Activated CD4-positive, alpha-beta T cell treated with anti-CD3 and anti-CD28 coated beads, Interleukin-2, amount 10 ng/mL, durations not matched to agents 24 days and 14 days (primary cell): ENCODE measurements at regions of chr11 and their contacts with region 1.

Region 1: GRCh38 chr11:5684646-5685362 is at the start of gene TRIM5:
- DNase-seq: peak; percentile 94
- H3K4me3 Mint-ChIP-seq: peak within 1 kb of the TSS; percentile 97
- H3K27ac Mint-ChIP-seq: peak within 1 kb of the TSS; percentile 95
- H3K4me1 Mint-ChIP-seq: peaks cover 44% of the 10 kb centered on the region
- H3K27me3 Mint-ChIP-seq: no peaks in the 10 kb centered on the region
- total RNA-seq, gene TRIM5: 9.3 and 9.7 TPM in 2 replicates

Region 2: DNA sequence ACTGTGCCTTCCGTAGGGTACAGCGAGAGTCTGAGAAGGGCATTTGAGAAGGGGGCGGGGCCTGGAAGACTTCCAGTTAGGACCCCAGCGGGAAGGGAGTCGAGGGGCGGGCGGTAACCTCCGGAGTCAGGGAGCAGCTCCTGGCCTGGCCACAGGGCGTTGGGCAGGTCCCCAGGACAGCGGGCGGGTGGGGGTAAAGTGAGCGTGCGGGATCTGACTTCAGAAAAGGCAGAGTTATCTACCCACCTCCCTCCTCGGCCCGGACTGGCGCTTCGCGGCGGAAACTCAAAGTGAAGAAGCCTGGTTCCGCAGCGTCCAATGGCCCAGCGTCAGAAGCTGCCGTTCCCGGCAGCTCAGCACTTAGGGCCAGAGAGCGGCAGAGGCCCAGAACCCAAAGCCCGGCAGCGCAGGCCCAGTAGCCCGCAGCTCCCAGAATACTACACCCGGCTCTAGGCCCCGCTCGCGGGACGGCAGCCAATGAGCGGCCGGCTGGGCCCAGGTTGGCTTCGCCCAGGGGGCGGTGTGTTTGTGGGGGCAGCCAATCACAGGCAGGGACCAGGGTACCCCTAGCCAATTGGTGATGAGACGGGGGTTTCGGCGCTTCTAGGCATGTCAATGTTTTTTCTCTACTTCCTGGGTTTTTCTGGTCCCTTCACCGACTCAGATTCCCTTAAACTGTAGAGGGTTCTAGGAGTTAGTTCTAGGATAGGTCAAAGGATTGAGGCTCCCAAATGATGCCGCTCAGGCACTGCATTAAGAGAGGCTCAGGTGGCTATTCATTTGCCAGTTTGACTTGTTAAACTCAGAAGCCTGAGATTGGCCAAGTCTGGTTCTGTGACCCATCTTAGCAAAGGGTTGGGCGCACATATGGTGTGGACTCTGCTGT is 1076.8 kb before region 1 on chr11 and contains the start of gene TRIM68:
- intact Hi-C with region 1: loop called (anchors 5 kb)
- DNase-seq: peak; percentile 98
- H3K4me3 Mint-ChIP-seq: peak within 1 kb of the TSS; percentile 89
- H3K27ac Mint-ChIP-seq: peak within 1 kb of the TSS; percentile 91
- H3K4me1 Mint-ChIP-seq: peaks cover 30% of the 10 kb centered on the region
- H3K27me3 Mint-ChIP-seq: no peaks in the 10 kb centered on the region
- total RNA-seq, gene TRIM68: 8.7 and 11.3 TPM in 2 replicates

Region 3: DNA sequence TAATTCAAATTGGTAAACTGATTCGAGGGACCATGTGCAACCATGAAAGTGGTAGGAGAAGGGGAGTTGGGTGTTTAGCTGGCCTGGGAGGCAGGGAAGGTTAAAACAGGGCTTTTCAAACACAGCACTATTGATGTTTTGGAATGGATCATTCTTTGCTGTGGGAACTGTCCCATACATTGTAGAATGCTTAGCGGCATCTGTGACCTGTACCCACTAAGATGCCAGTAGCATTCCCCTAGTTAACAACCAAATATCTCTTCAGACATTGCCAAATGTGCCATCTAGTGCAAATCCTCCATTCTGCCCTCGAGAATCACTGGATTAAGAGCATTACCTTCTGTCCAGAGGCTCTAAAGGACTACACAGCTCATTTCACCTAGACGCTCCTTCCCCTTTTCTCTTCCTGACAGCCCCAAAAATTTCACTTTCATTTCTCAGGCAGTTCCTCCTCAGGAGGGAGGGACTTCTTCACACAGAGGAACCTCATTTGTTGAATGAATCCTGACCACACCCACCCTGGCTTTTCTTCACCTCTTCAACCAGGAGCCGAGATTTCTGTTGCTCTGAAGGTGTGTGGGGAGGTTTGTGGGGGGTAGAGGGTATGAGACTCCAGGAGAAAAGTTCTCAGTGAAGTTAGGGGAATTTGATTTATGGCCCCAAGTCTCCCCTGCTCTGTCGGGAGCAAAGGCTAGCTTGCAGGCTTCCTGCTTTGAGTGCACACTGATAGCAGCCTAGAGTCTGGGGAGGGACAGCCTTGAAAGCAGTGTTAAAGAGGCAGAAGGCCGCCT is 60.1 kb before region 1 on chr11 and contains the start of gene TRIM34:
- intact Hi-C with region 1: loop called (anchors 1 kb)
- DNase-seq: peak; percentile 93
- H3K4me3 Mint-ChIP-seq: peak within 1 kb of the TSS; percentile 92
- H3K27ac Mint-ChIP-seq: peak within 1 kb of the TSS; percentile 90
- H3K4me1 Mint-ChIP-seq: peaks cover 39% of the 10 kb centered on the region
- H3K27me3 Mint-ChIP-seq: no peaks in the 10 kb centered on the region
- total RNA-seq, gene TRIM34: 5.3 TPM in 2 replicates

Region 4: DNA sequence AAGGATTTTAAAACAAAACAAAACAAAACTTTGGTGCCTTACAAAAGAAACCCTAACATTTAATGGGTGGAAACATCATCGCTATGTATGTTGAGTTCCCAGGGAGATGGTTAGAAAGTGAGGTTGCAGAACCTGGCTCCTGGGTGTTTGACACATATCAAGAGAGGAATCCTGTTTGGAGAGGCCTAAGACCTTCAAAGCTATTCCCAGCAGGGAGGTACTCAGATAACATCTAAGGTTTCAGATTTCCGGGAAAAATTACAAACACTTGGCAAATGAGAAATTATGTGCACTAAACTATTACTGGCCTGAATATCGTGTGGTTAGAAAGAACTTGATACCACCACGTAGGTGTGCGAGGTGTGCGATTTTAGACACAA is 18.4 kb before region 1 on chr11:
- intact Hi-C with region 1: no loop called
- DNase-seq: peak; percentile 10
- H3K4me3 Mint-ChIP-seq: no peak overlapping the region
- H3K27ac Mint-ChIP-seq: no peak overlapping the region
- H3K4me1 Mint-ChIP-seq: no peaks in the 10 kb centered on the region
- H3K27me3 Mint-ChIP-seq: no peaks in the 10 kb centered on the region

Region 5: DNA sequence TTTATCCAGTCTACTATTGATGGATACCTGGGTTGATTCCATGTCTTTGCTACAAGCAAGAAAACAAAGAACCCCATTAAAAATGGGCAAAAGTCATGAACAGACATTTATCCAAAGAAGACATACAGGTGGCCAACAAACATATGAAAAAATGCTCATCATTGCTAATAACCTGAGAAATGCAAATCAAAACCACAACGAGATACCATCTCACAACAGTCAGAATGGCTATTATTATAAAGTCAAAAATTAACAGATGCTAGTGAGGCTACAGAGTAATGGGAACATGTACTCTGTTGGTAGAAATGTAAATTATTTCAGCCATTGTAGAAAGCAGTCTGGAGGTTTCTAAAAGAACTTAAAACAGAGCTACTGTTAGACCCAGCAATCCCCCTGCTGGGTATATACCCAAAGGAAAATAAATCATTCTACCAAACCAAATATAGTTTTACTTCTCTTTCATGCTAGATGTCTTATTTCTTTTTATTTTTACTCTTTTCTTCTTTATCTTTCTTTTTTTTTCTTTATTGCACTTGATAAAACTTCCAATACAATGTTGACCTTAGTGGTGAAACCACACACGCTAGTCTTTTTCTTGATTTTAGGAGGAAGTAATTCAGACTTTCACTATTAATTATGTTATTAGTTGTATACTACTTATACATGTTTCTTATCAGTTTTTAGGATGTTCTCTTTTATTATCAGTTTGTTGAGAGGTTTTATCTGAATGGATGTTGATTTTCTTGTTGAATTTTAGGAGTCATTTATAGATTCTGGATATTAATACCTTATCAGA is 19.1 kb after region 1 on chr11:
- intact Hi-C with region 1: no loop called
- DNase-seq: no peak
- H3K4me3 Mint-ChIP-seq: no peak overlapping the region
- H3K27ac Mint-ChIP-seq: no peak overlapping the region
- H3K4me1 Mint-ChIP-seq: peaks cover 18% of the 10 kb centered on the region
- H3K27me3 Mint-ChIP-seq: no peaks in the 10 kb centered on the region

Region 6: GRCh38 chr11:5737091-5737490 is 52.3 kb after region 1 on chr11:
- intact Hi-C with region 1: no loop called
- DNase-seq: no peak
- H3K4me3 Mint-ChIP-seq: no peak overlapping the region
- H3K27ac Mint-ChIP-seq: no peak overlapping the region
- H3K4me1 Mint-ChIP-seq: no peaks in the 10 kb centered on the region
- H3K27me3 Mint-ChIP-seq: peaks cover 2% of the 10 kb centered on the region

Region 7: GRCh38 chr11:5808500-5809121 is 123.8 kb after region 1 on chr11 and contains the start of gene OR52N2:
- intact Hi-C with region 1: loop called (anchors 1 kb)
- DNase-seq: peak; percentile 92
- H3K4me3 Mint-ChIP-seq: peak within 1 kb of the TSS; percentile 92
- H3K27ac Mint-ChIP-seq: peak within 1 kb of the TSS; percentile 42
- H3K4me1 Mint-ChIP-seq: peaks cover 10% of the 10 kb centered on the region
- H3K27me3 Mint-ChIP-seq: peaks cover 29% of the 10 kb centered on the region
- total RNA-seq, gene OR52N2: not detected in 2 replicates

Region 8: GRCh38 chr11:6234387-6235107 is 549.7 kb after region 1 on chr11 and contains the start of gene FHIP1B:
- intact Hi-C with region 1: loop called (anchors 10 kb)
- DNase-seq: peak; percentile 100
- H3K4me3 Mint-ChIP-seq: peak within 1 kb of the TSS; percentile 95
- H3K27ac Mint-ChIP-seq: peak within 1 kb of the TSS; percentile 90
- H3K4me1 Mint-ChIP-seq: peaks cover 35% of the 10 kb centered on the region
- H3K27me3 Mint-ChIP-seq: peaks cover 1% of the 10 kb centered on the region
- total RNA-seq, gene FHIP1B: 19.3 and 20.2 TPM in 2 replicates

Region 9: DNA sequence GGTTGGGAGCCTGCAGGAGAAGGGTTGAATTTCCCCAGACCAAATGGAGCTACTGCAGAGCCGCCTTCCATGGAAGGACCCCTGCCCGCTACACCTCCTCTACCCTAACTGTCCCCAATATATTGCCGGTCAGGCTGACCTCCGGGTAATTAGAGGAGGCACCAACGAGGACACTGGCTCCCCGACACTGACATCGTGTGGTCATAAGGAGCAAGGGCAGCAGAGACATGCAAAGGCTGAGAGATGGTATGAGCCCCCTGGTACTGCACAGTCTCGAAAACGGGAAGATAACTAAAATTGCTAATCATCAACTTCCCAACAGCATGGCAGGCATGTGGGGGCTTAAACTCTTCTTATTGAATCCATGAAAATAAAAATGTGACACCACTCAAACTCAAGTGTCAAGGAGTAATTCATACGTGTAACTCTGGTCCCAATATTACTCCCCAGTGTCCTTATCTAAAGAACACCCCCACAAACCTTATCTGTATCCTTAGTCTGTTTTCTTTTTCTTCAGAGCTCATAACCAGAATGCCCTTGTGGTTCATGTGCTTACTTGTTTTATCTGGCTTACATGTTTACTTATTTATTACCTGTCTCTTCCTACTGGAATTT is 631.1 kb after region 1 on chr11:
- intact Hi-C with region 1: loop called (anchors 5 kb)
- DNase-seq: peak; percentile 80
- H3K4me3 Mint-ChIP-seq: no peak overlapping the region
- H3K27ac Mint-ChIP-seq: no peak overlapping the region
- H3K4me1 Mint-ChIP-seq: peaks cover 25% of the 10 kb centered on the region
- H3K27me3 Mint-ChIP-seq: peaks cover 47% of the 10 kb centered on the region

Region 10: GRCh38 chr11:6419009-6419631 is 734.3 kb after region 1 on chr11 and contains the start of gene APBB1:
- intact Hi-C with region 1: loop called (anchors 10 kb)
- DNase-seq: peak; percentile 93
- H3K4me3 Mint-ChIP-seq: no peak within 1 kb of the TSS
- H3K27ac Mint-ChIP-seq: peak within 1 kb of the TSS; percentile 45
- H3K4me1 Mint-ChIP-seq: peaks cover 3% of the 10 kb centered on the region
- H3K27me3 Mint-ChIP-seq: peaks cover 33% of the 10 kb centered on the region
- total RNA-seq, gene APBB1: 24.1 TPM in 2 replicates